Posterior cingulate gyrus (tissue), 11 donors: ENCODE measurements at regions of chr3 and their contacts with region 1.

Region 1: DNA sequence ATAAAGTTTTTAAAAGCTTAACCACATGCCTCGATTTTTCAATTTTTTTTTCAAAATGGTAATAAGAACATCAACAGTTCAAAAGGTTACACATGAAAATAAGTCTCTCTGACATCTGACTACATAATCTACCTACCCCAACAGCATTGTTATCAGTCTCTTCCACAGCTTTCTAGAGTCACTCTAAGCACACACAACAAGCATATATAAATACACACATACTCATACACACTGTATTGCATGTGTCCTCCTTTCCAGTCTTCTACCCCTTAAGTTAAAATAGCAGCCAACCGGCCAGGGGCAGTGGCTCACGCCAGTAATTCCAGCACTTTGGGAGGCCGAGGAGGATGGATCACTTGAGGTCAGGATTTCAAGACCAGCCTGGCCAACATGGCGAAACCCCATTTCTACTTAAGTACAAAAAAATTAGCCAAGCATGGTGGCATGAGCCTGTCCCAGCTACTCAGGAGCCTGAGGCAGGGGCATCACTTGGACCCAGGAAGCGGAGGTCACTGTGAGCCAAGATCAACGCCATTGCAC is 12.2 kb downstream of the TBL1XR1 start:
- DNase-seq: no peak

Region 2: GRCh38 chr3:177126015-177126773 is 58.9 kb before region 1 on chr3:
- intact Hi-C with region 1: loop called (anchors 10 kb)
- DNase-seq: no peak

Region 3: GRCh38 chr3:178083906-178084866 is 899.1 kb after region 1 on chr3:
- intact Hi-C with region 1: no loop called
- DNase-seq: no peak